ENCODE measurements at regions of chr1 and their contacts with region 1.

Region 1: DNA sequence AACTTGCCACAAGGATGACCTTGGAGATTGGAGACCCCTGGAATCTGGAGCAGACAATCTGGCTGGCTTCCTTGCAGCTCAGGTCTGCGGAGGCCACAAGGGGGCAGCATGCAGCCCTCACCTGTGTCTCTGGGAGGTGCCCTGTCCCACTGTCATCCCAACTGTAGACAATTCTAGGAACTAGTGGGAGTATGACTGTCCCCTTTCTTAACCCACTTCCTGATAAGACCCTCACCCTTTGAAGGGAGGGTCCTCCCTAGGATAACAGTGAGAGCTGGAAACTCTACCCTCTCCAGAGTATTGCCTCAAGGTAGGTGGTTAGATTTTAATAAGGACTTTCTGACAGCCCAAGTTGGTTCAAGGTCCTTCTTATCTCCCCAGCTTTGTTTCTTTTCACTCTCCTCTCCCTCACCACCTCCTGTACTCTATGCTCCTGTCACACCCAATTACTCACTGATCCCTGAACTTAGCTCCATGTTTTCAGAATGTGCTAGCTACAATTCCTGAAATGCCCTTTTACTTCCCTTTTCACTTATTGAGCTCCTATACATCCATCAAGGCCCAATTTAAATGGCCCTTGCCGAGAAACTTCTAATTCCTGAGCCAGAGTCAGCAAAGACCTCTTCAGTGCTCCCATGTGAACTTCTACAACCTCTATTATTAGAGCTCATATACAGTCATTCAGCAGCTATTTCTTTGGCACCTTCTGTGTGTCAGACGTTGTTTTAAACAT is 9.2 kb upstream of the KCNQ4 start:
- DNase-seq: peak; percentile 52
- H3K4me3 Mint-ChIP-seq: no peak overlapping the region
- H3K27ac Mint-ChIP-seq: no peak overlapping the region
- H3K4me1 Mint-ChIP-seq: peaks cover 6% of the 10 kb centered on the region
- H3K27me3 Mint-ChIP-seq: no peaks in the 10 kb centered on the region
- CTCF ChIP-seq: peak; percentile 79

Region 2: GRCh38 chr1:40612345-40612831 is 162.0 kb before region 1 on chr1:
- CTCF ChIA-PET with region 1: interaction called, 3 read pairs
- POLR2A ChIA-PET with region 1: interaction called, 3 read pairs
- intact Hi-C with region 1: loop called (anchors 1 kb)
- DNase-seq: peak; percentile 78
- H3K4me3 Mint-ChIP-seq: no peak overlapping the region
- H3K27ac Mint-ChIP-seq: no peak overlapping the region
- H3K4me1 Mint-ChIP-seq: peaks cover 12% of the 10 kb centered on the region
- H3K27me3 Mint-ChIP-seq: no peaks in the 10 kb centered on the region
- CTCF ChIP-seq: peak; percentile 89

Region 3: DNA sequence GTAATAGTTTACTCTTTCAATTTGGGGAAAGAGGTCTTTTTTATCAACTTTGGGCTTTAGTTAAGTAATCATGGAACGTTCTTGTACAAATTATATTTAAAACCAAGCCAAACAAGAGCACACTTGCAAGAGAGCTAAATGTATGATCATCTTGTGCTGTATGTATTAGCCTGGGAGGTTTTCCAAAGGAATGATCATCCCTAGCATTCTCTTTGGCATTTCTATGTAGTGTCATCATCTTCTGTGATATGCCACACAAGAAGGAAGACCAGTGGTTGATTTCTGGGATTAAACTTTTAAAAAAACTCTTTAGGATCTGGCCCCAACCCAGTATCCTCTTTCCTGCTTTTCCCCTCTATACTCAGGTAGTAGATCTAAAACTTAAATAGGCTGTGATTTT is 29.3 kb before region 1 on chr1:
- CTCF ChIA-PET with region 1: interaction called, 10 read pairs
- POLR2A ChIA-PET with region 1: interaction called, 3 read pairs
- intact Hi-C with region 1: no loop called
- DNase-seq: no peak
- H3K4me3 Mint-ChIP-seq: no peak overlapping the region
- H3K27ac Mint-ChIP-seq: peak overlapping the region; percentile 69
- H3K4me1 Mint-ChIP-seq: peaks cover 12% of the 10 kb centered on the region
- H3K27me3 Mint-ChIP-seq: no peaks in the 10 kb centered on the region
- CTCF ChIP-seq: no peak

Region 4: DNA sequence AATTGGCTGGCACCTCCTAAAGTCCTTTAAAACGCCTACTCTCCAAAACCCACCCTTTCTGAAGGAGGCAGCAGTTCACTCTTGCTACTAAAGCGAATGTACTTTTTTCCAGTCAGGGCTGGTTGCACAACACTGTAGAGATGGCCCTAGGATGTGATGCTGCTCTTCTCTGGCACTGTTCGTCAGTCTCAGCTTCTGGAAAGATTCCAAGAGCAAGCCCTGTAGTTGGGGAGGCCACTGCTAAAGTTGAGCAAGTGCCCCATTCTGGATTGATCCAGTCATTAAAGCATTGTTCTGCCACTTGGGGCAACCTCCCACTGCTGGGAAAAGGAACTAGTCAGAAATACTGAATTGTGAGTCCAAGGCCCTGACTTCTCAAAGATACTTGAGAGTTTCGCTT is 19.4 kb before region 1 on chr1:
- CTCF ChIA-PET with region 1: interaction called, 47 read pairs
- POLR2A ChIA-PET with region 1: interaction called, 6 read pairs
- intact Hi-C with region 1: no loop called
- DNase-seq: peak; percentile 96
- H3K4me3 Mint-ChIP-seq: no peak overlapping the region
- H3K27ac Mint-ChIP-seq: peak overlapping the region; percentile 53
- H3K4me1 Mint-ChIP-seq: peaks cover 29% of the 10 kb centered on the region
- H3K27me3 Mint-ChIP-seq: no peaks in the 10 kb centered on the region
- CTCF ChIP-seq: no peak

Region 5: DNA sequence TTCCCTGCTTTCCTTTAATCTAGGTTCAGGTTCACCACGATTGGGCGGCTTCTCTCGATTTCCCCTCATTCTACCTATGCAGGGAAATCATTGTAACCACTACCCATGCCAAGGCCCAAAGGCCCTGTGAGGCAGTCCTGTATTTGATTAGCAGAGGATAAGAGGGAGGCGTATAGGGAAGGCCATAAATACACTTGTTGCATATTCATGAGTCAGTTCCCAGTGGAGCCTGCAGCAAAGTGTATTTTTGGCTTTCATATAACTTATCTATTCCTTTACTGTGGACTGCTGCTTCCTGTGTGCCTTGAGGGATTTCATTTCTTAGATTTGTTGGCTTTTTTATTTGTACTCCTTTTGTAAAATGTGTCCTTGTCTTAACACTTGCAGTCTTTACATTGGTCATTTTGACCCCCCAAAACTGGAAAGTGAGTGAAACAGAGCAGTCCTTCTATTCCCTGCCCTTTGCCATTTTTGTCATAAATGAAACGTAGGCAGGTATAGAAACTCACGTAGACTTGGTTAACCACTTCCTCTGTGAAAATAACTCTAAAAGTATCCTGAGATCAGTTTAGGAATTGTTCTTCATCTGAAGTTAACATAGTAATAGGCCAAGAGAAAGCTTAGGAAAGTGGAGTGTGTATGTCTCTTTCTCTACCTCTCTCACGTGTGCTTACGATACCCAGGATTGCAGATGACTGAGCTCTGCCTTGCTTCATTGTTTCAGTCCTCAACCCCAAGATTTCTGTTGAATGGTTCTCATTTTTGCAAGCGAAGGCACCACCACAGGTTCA is 10.5 kb before region 1 on chr1:
- CTCF ChIA-PET with region 1: interaction called, 47 read pairs
- POLR2A ChIA-PET with region 1: interaction called, 8 read pairs
- intact Hi-C with region 1: no loop called
- DNase-seq: no peak
- H3K4me3 Mint-ChIP-seq: no peak overlapping the region
- H3K27ac Mint-ChIP-seq: no peak overlapping the region
- H3K4me1 Mint-ChIP-seq: no peaks in the 10 kb centered on the region
- H3K27me3 Mint-ChIP-seq: no peaks in the 10 kb centered on the region
- CTCF ChIP-seq: no peak

Region 6: GRCh38 chr1:40849801-40850592 is 75.6 kb after region 1 on chr1:
- CTCF ChIA-PET with region 1: interaction called, 10 read pairs
- POLR2A ChIA-PET with region 1: no interaction called
- intact Hi-C with region 1: loop called (anchors 2 kb)
- DNase-seq: peak; percentile 75
- H3K4me3 Mint-ChIP-seq: no peak overlapping the region
- H3K27ac Mint-ChIP-seq: no peak overlapping the region
- H3K4me1 Mint-ChIP-seq: peaks cover 6% of the 10 kb centered on the region
- H3K27me3 Mint-ChIP-seq: no peaks in the 10 kb centered on the region
- CTCF ChIP-seq: peak; percentile 84